ENCODE measurements at regions of chr3 and their contacts with region 1.

Region 1: DNA sequence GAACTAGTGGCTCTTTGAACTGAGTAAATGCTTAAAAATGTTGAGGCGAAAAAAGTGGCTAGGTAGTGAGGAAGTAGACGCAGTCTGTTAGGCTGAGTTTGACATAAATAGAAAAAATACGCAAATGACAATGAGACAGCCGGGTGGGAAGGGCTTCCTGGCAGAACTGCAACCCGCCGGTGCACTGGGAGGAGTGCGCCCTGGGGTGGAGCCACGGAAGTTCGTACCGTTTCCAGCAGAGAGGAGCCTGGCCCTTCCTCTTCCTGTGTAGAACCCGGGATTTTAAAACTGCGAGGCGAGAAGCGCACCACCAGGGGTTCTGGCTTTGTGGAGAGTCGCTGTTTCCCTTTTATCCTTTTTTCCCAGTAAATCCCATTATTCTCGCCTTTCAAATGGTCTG is 602.6 kb downstream of the PYDC2 start:
- DNase-seq: peak; percentile 23
- ATAC-seq: peak; percentile 92
- H3K4me3 Mint-ChIP-seq: peak overlapping the region; percentile 76
- H3K27ac Mint-ChIP-seq: peak overlapping the region; percentile 83
- H3K4me1 Mint-ChIP-seq: peaks cover 40% of the 10 kb centered on the region
- H3K27me3 Mint-ChIP-seq: no peaks in the 10 kb centered on the region
- CTCF ChIP-seq: no peak

Region 2: GRCh38 chr3:192042116-192042515 is 21.5 kb before region 1 on chr3:
- CTCF ChIA-PET with region 1: no interaction called
- POLR2A ChIA-PET with region 1: no interaction called
- intact Hi-C with region 1: loop called (anchors 1 kb)
- DNase-seq: no peak
- ATAC-seq: peak; percentile 73
- H3K4me3 Mint-ChIP-seq: no peak overlapping the region
- H3K27ac Mint-ChIP-seq: peak overlapping the region; percentile 36
- H3K4me1 Mint-ChIP-seq: peaks cover 16% of the 10 kb centered on the region
- H3K27me3 Mint-ChIP-seq: no peaks in the 10 kb centered on the region
- CTCF ChIP-seq: no peak

Region 3: GRCh38 chr3:192130534-192131132 is 67.1 kb after region 1 on chr3:
- CTCF ChIA-PET with region 1: no interaction called
- POLR2A ChIA-PET with region 1: no interaction called
- intact Hi-C with region 1: loop called (anchors 1 kb)
- DNase-seq: no peak
- ATAC-seq: peak; percentile 72
- H3K4me3 Mint-ChIP-seq: no peak overlapping the region
- H3K27ac Mint-ChIP-seq: no peak overlapping the region
- H3K4me1 Mint-ChIP-seq: peaks cover 9% of the 10 kb centered on the region
- H3K27me3 Mint-ChIP-seq: no peaks in the 10 kb centered on the region
- CTCF ChIP-seq: no peak

Region 4: DNA sequence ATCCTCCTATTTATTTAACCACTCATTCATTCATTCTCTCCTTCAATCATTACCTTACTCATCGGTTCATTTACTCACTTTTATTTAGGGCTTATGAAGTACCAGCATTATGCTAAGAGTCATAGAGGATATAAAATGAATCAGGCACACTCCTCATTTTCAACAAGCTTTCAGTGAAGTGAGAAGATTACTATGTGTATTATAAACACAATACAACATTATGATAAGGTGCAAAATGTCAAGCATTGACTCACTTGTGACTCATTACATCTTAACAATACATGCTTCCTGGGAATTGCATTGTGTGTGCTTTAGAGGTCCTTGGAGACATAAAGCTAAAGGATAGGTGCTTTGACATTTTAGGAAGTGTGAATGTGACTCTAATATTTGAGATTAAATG is 1237.9 kb after region 1 on chr3:
- CTCF ChIA-PET with region 1: no interaction called
- POLR2A ChIA-PET with region 1: no interaction called
- intact Hi-C with region 1: no loop called
- DNase-seq: no peak
- ATAC-seq: no peak
- H3K4me3 Mint-ChIP-seq: no peak overlapping the region
- H3K27ac Mint-ChIP-seq: no peak overlapping the region
- H3K4me1 Mint-ChIP-seq: no peaks in the 10 kb centered on the region
- H3K27me3 Mint-ChIP-seq: peaks cover 2% of the 10 kb centered on the region
- CTCF ChIP-seq: no peak

Measured in activated B cell treated with CpG ODN at 0.5 μM for 24 hours (primary cell).